Endothelial cell of umbilical vein (primary cell): ENCODE measurements at regions of chr1 and their contacts with region 1.

Region 1: GRCh38 chr1:1291548-1292441 is 11.6 kb downstream of the SCNN1D start:
- DNase-seq: peak; percentile 50
- H3K4me3 ChIP-seq: no peak overlapping the region
- H3K27ac ChIP-seq: no peak overlapping the region
- H3K4me1 ChIP-seq: no peaks in the 10 kb centered on the region
- H3K27me3 ChIP-seq: no peaks in the 10 kb centered on the region
- CTCF ChIP-seq: peak; percentile 73 to 83
- POLR2A ChIP-seq: no peak

Region 2: DNA sequence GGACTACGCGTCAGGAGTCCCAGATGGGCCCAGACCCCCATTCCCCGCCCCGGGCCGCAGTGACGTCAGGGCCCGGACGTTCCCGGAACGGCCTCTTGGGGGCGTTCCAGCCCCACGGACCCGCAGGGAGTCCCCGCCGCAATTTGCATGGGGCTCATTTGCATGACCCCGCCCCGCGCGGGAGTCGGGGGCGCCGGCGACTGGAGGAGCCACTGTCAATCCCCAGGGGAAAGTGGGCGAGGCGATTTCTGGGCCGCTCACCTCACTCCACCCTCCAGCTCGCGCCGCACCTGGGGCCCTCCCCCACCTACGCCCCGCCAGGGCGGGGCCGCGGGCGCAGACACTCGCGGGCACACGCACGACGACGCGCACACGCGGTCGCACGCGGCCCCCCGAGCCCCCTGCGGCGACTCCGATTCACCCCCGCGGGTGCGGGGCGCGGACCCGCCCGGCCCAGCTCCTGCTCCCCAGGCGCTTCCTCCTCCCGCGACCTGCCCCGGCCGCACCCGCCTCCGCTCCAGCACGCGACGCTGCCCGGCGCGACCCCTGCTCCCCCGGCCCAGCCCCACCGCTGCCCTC is 258.7 kb before region 1 on chr1:
- CTCF ChIA-PET with region 1: interaction called, 19 read pairs
- POLR2A ChIA-PET with region 1: no interaction called
- dilution Hi-C with region 1: no loop called
- intact Hi-C with region 1: loop called (anchors 1 kb)
- DNase-seq: peak; percentile 80
- H3K4me3 ChIP-seq: peak overlapping the region in 1 of 3 experiments; percentile 20
- H3K27ac ChIP-seq: no peak overlapping the region
- H3K4me1 ChIP-seq: no peaks in the 10 kb centered on the region
- H3K27me3 ChIP-seq: no peaks in the 10 kb centered on the region
- CTCF ChIP-seq: peak; percentile 76 to 90
- POLR2A ChIP-seq: no peak

Region 3: DNA sequence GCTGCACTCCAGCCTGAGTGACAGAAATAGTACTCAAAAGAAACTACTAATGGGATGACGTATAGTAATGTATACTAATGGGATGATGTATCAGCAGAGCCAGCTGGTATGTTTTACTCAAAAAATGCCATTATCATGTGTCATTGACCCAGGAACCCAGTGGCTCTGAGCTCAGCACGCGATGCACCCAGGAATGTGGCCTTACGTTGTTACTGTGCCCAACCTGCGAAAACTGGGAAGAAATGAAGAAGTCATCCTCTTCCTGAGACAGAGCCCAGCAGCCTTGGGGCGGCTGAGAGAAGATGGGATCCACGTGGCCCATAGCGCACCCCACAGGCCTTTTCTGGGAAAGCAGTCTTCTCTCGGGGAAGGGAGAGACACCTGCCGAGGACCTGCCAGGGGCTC is 26.9 kb before region 1 on chr1:
- CTCF ChIA-PET with region 1: interaction called, 9 read pairs
- POLR2A ChIA-PET with region 1: no interaction called
- dilution Hi-C with region 1: no loop called
- intact Hi-C with region 1: loop called (anchors 1 kb)
- DNase-seq: peak; percentile 28
- H3K4me3 ChIP-seq: no peak overlapping the region
- H3K27ac ChIP-seq: peak overlapping the region; percentile 85
- H3K4me1 ChIP-seq: peaks cover 24% of the 10 kb centered on the region
- H3K27me3 ChIP-seq: no peaks in the 10 kb centered on the region
- CTCF ChIP-seq: peak; percentile 31 to 39
- POLR2A ChIP-seq: no peak

Region 4: GRCh38 chr1:1703796-1704195 is 412.0 kb after region 1 on chr1:
- CTCF ChIA-PET with region 1: no interaction called
- POLR2A ChIA-PET with region 1: no interaction called
- dilution Hi-C with region 1: no loop called
- intact Hi-C with region 1: no loop called
- DNase-seq: no peak
- H3K4me3 ChIP-seq: no peak overlapping the region
- H3K27ac ChIP-seq: no peak overlapping the region
- H3K4me1 ChIP-seq: no peaks in the 10 kb centered on the region
- H3K27me3 ChIP-seq: no peaks in the 10 kb centered on the region
- CTCF ChIP-seq: no peak
- POLR2A ChIP-seq: no peak